Left colon (tissue), 2 donors: ENCODE measurements at regions of chr12 and their contacts with region 1.

Region 1: GRCh38 chr12:57111031-57111734 is at the start of gene STAT6:
- DNase-seq: peak; percentile 90 to 92
- ATAC-seq: peak; percentile 79
- total RNA-seq, gene STAT6: 182 to 214 TPM

Region 2: GRCh38 chr12:57012600-57013465 is 98.3 kb before region 1 on chr12:
- intact Hi-C with region 1: loop called in 1 of 2 experiments (anchors 5 kb)
- DNase-seq: no peak
- ATAC-seq: no peak

Region 3: GRCh38 chr12:57069523-57069922 is 41.7 kb before region 1 on chr12:
- intact Hi-C with region 1: loop called (anchors 2 to 10 kb)
- DNase-seq: peak in 1 of 2 donors; percentile 58
- ATAC-seq: peak; percentile 97

Region 4: DNA sequence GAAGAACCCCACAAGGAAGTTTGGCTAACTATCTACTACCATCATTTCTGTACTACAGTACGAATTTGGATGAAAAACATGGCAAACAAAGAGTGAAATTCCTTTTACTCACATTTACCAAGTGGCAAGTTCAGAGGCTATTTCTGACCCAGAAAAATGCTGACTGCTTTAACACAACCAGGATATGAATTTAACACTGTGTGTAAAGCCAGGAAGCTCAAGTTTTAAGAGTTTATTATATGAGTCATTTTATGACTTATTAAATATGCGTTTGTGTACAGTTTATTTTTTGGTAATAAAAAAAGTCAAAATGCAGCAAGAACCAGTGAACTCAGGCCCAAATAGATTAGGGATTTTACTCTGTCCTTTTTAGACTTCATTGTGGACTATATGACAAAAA is 198.2 kb after region 1 on chr12:
- intact Hi-C with region 1: no loop called
- DNase-seq: no peak
- ATAC-seq: peak; percentile 93